Prostate gland (tissue), 2 donors: ENCODE measurements at regions of chr11 and their contacts with region 1.

Region 1: DNA sequence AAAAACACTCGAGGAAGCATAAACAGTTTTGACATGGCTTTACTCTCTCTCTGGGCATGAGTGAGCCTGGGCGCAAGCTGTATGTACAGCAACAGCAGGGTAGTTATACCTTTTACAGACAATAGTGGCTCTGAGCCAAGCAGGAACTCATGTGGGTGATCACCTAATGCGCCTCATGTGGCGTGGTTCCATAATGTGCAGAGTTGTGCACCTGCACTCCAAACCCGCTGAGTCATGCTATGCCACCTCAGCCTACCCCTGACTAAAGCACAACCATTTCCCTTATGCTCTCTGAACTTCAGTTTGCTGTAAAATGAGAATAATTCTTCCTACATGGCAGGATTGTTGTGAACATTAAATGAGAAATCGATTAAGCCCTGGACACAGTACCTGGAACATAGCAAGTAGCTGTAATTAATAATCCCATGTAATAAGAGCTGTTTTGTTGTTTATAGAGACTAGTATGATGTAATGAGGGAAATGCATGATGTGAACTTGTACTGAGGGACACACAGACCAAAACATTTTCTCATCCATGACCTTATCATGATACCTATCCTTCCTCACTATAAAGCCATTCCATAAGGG is 71.6 kb downstream of the CCDC34 start:
- DNase-seq: no peak
- H3K4me3 ChIP-seq: no peak overlapping the region
- H3K27ac ChIP-seq: no peak overlapping the region
- H3K4me1 ChIP-seq: no peaks in the 10 kb centered on the region
- H3K27me3 ChIP-seq: no peaks in the 10 kb centered on the region
- CTCF ChIP-seq: no peak
- POLR2A ChIP-seq: no peak

Region 2: DNA sequence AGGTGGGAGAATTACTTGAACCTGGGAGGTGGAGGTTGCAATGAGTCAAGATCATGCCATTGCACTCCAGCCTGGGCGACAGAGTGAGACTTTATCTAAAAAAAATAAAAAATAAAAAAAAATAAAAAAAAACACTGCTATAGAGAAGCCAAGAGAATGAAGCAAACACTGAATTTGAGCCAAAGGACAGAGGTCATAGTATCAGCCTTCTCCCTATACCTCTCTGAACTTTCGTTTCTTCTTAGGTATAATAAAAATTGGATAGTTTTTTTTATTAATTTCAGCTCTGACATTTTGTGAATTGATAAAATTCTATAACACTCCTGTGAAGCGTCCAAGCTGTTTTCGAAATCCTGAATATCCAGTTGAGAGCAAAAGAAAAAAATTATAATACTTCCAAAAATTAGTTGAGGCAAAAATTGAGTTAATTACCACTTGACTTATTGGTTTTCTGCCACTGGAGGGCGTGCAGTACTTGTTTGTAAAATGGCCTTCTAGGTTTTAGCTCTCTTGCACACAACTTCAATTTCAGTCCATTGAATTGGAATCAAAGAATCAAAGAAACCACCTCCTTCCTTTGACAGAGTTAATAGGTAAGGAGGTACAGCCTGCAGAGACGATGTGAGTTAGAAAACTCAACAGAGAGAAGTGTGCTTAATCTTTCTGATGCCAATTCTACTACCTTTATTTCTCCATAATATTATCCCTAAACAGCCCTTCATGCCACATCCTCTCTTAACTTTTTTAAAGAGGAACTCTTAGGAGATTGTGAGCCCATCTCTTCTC is 107.5 kb before region 1 on chr11:
- intact Hi-C with region 1: loop called (anchors 2 kb)
- DNase-seq: peak; percentile 64
- H3K4me3 ChIP-seq: no peak overlapping the region
- H3K27ac ChIP-seq: no peak overlapping the region
- H3K4me1 ChIP-seq: no peaks in the 10 kb centered on the region
- H3K27me3 ChIP-seq: no peaks in the 10 kb centered on the region
- CTCF ChIP-seq: peak; percentile 32 to 86 (median 77)
- POLR2A ChIP-seq: no peak

Region 3: DNA sequence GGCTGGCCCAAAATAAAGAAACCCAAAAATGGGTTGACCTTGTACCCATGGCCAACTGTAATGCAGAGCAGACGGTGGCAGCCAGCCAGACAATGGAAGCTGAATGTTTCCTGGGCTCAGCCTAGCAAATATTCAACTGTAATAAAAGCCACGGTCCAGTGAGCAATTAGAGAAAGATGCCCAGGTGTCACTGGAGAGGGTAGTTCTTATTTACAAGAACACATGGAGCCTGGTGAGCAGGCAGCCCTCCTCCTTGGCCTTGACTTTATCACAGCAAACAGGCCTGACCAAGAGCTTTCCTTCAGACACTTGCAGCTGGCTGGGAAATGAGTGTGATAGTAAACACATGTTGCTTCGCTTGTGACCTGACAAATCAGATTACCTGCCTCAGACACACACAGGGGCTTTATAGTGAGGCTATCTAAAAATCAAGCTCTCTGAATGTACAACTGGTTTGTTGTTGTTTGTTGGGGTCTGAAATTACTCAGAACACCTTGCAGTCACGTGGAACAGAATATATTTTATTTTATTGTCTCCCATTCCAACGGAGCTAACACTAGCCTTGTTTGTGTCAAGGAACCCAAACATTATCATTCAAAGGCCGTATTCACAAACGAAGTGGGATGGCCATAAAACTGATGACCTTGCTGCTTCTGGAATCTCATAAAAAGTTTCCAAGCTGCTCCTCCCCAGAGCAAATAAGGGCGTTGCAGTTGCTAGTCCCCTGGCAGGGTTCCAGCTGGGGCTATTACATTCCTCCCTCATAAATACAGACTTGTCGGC is 89.8 kb before region 1 on chr11:
- intact Hi-C with region 1: loop called (anchors 5 kb)
- DNase-seq: peak; percentile 98
- H3K4me3 ChIP-seq: no peak overlapping the region
- H3K27ac ChIP-seq: peak overlapping the region; percentile 61 to 72
- H3K4me1 ChIP-seq: peaks cover 27% of the 10 kb centered on the region
- H3K27me3 ChIP-seq: no peaks in the 10 kb centered on the region
- CTCF ChIP-seq: no peak
- POLR2A ChIP-seq: no peak

Region 4: DNA sequence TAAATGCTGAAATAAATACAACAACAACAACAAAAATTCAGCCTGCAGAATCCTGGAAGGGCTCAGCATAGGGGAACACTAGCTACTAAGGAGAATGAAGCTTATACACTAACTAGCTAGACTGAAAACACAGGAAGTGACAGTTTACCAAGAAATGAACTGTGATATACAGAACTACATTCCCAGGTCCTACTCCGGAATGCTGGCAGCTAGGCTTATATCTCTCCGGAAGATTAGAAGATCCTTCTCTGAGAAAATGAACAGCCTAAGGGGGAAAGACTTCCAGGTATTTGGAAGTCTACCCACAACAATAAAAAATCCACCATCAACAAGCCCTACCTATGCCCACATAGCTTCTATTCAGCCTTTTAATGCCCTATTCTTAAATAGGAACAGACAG is 40.6 kb after region 1 on chr11:
- intact Hi-C with region 1: no loop called
- DNase-seq: no peak
- H3K4me3 ChIP-seq: no peak overlapping the region
- H3K27ac ChIP-seq: no peak overlapping the region
- H3K4me1 ChIP-seq: no peaks in the 10 kb centered on the region
- H3K27me3 ChIP-seq: no peaks in the 10 kb centered on the region
- CTCF ChIP-seq: no peak
- POLR2A ChIP-seq: no peak